ENCODE measurements at regions of chr13 and their contacts with region 1.

Region 1: GRCh38 chr13:46288570-46289259 is 77.0 kb downstream of the LRRC63 start:
- DNase-seq: peak; percentile 66
- ATAC-seq: peak; percentile 76
- H3K4me3 ChIP-seq: no peak overlapping the region
- H3K27ac ChIP-seq: no peak overlapping the region
- H3K4me1 ChIP-seq: no peaks in the 10 kb centered on the region
- H3K27me3 ChIP-seq: no peaks in the 10 kb centered on the region
- CTCF ChIP-seq: peak; percentile 81

Region 2: DNA sequence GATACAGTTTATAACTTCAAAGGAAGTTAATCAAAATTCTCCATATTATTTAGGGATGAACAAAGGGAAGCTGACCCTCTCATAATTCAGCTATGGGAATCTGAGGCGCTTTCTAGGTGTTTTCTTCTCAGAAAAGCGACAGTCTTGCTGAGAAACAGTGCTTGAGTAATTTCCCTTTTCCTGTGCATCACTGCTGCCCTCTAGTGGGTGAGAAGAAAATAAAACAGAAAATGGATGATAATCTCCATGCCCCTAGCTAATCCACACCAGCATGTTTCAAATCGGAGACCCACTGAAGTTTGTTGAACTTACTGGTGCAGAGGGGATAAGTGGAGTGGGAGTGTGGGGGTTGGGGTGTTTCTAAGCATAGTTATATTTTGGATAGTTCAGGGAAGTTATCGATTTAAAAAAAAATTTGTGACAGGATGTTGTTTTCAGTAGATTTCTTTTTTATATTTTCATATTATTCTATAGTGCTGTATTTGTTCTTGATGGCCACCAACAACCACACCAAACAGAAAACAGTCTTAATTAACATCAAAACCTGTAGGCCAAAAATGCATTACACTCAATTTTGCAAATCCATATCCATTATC is 128.1 kb before region 1 on chr13:
- CTCF ChIA-PET with region 1: no interaction called
- POLR2A ChIA-PET with region 1: no interaction called
- intact Hi-C with region 1: loop called (anchors 1 kb)
- DNase-seq: peak; percentile 57
- ATAC-seq: peak; percentile 70
- H3K4me3 ChIP-seq: no peak overlapping the region
- H3K27ac ChIP-seq: no peak overlapping the region
- H3K4me1 ChIP-seq: no peaks in the 10 kb centered on the region
- H3K27me3 ChIP-seq: no peaks in the 10 kb centered on the region
- CTCF ChIP-seq: peak; percentile 77

Region 3: DNA sequence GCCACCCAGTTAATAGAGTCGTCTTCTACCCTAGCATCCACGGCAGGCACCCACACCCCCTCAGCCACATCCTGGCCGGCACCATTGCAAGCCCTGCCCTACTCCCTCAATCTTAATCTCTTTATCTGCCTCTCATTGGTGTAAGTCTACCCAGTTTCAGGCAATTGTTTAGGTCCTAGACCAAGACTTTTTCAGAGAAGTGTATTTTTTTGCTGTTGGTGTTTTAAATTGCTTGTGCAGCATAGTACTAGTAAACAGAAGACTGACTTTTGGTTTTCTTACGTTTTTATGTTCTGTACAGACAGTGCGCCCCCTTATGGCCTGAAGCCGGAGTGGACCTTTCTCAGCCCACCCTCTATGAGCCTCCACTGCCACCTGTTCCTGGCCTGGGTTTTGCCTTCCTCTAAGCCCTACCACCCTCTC is 104.4 kb before region 1 on chr13:
- CTCF ChIA-PET with region 1: no interaction called
- POLR2A ChIA-PET with region 1: no interaction called
- intact Hi-C with region 1: loop called (anchors 5 kb)
- DNase-seq: peak; percentile 43
- ATAC-seq: no peak; the same call in 1 of the 2 replicates
- H3K4me3 ChIP-seq: no peak overlapping the region
- H3K27ac ChIP-seq: no peak overlapping the region
- H3K4me1 ChIP-seq: 0 out of 2 replicates have a peak, but pooled peaks cover 5% of the 10 kb centered on the region
- H3K27me3 ChIP-seq: no peaks in the 10 kb centered on the region
- CTCF ChIP-seq: peak; percentile 70

Region 4: DNA sequence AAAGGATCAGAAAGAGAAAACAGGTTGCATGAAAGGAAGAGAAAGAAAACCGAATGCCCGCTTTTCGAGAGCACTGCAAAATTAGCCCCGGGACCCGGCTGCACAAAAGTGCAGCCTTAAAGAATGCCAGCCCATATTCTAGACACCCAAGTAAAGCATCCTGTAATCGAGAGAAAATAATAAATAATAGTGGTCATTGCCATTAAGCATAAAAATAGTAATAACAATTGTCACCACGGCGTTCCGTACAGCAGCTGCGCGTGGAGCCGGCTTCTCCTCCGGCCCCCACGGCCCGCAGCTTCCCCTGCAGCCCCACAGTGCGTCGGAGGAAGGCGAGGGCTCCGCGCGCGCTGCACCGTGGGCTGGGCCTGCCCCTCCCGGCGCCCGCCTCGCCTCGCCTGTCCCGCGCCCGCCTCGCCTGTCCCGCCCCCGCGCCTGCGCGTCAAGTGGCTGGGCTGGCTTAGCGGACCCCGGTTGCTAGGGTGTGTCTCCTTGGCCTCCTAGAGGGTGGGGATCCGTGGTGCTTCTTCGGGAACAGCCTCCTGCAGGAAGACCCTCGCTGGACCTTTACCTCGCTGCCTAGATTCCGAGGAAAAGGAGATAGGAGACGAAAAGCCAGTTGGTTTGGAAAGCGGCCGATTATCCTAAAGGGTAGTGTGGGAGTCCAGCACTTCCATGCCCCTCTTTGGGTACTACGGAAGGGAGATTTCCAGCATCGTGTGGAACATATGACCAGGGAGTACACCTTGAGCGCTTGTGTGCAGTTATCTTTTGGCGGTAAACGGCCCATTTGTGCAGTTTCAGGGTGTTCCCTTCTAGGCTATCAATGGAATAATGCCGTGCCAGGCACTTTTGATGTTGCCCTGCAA is 77.0 kb before region 1 on chr13 and contains the start of gene LRRC63:
- CTCF ChIA-PET with region 1: no interaction called
- POLR2A ChIA-PET with region 1: no interaction called
- intact Hi-C with region 1: loop called (anchors 5 kb)
- DNase-seq: peak; percentile 61
- ATAC-seq: peak; percentile 92
- H3K4me3 ChIP-seq: peak within 1 kb of the TSS; percentile 89
- H3K27ac ChIP-seq: 0 out of 2 replicates have a peak within 1 kb of the TSS, but pooled peaks have one; percentile 8
- H3K4me1 ChIP-seq: peaks cover 24% of the 10 kb centered on the region
- H3K27me3 ChIP-seq: no peaks in the 10 kb centered on the region
- CTCF ChIP-seq: no peak
- total RNA-seq, gene LRRC63: 0.26 and 0.35 TPM in 2 replicates

Region 5: DNA sequence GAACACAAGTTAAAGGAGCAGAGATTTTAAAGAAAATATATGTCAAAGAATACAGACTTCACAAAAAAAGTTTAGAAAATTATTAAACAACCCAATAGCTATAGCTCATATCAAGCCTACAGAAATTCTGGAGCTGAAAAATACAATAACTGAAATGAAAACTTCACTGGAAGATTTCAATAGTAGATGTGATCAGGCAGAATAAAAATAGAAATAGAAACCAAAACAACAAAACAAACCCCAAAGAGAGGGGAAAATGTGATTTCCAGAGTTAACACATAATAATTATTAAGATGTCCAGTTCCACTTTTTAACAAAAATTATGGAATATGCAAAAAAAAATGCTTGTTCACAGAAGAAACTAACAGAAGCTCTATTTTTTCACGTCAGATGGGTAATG is 53.4 kb before region 1 on chr13:
- CTCF ChIA-PET with region 1: no interaction called
- POLR2A ChIA-PET with region 1: no interaction called
- intact Hi-C with region 1: no loop called
- DNase-seq: no peak
- ATAC-seq: no peak
- H3K4me3 ChIP-seq: no peak overlapping the region
- H3K27ac ChIP-seq: no peak overlapping the region
- H3K4me1 ChIP-seq: no peaks in the 10 kb centered on the region
- H3K27me3 ChIP-seq: no peaks in the 10 kb centered on the region
- CTCF ChIP-seq: no peak

Measured in PC-3 (cell line).